ENCODE measurements at regions of chr2 and their contacts with region 1.

Region 1: GRCh38 chr2:170815746-170816503 is 762 bp upstream of the GAD1 start:
- DNase-seq: peak; percentile 65
- H3K4me3 Mint-ChIP-seq: peak overlapping the region; percentile 87
- H3K27ac Mint-ChIP-seq: peak overlapping the region; percentile 55
- H3K4me1 Mint-ChIP-seq: peaks cover 38% of the 10 kb centered on the region
- H3K27me3 Mint-ChIP-seq: peaks cover 50% of the 10 kb centered on the region

Region 2: GRCh38 chr2:170324640-170325046 is 491.3 kb before region 1 on chr2:
- intact Hi-C with region 1: loop called (anchors 1 kb)
- DNase-seq: peak; percentile 38
- H3K4me3 Mint-ChIP-seq: no peak overlapping the region
- H3K27ac Mint-ChIP-seq: no peak overlapping the region
- H3K4me1 Mint-ChIP-seq: peaks cover 3% of the 10 kb centered on the region
- H3K27me3 Mint-ChIP-seq: no peaks in the 10 kb centered on the region

Region 3: DNA sequence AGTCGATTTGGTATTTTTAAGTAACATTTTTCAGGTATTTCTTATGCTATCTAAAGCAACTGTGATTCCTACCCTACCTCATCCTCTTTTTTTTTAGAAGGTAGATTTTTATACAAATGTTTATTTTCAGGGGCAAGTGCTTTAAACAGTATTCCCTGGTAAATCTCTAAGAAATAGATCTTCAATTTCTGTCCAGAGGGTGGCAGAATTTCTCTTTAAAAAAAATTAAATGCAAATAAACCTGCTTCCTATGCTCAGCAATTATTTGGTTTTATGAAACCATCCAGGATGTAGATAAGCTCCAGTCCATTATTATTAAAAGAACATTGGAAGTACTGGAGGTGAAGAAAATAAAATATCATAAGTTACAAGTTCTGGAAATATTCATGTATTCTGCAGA is 446.0 kb before region 1 on chr2:
- intact Hi-C with region 1: loop called (anchors 2 kb)
- DNase-seq: no peak
- H3K4me3 Mint-ChIP-seq: peak overlapping the region; percentile 71
- H3K27ac Mint-ChIP-seq: peak overlapping the region; percentile 86
- H3K4me1 Mint-ChIP-seq: peaks cover 86% of the 10 kb centered on the region
- H3K27me3 Mint-ChIP-seq: no peaks in the 10 kb centered on the region

Region 4: DNA sequence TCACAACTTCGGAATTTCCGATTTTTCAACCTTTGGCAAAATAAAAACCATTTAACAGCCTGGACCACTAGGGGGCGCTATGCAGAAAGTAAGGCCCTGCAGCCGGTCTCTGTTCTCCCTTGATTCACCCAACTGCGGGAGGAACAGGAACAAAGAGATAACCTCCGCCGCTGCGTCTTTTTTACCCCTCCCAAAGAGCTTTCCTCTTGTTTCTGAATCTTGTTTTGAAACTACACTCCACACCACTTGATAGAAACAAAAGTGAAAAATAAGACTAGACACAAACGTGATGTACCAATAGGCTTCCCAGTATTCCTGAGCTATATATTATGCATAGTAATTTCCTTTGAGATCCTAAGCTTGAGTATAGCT is 406.8 kb before region 1 on chr2:
- intact Hi-C with region 1: loop called (anchors 2 kb)
- DNase-seq: peak; percentile 60
- H3K4me3 Mint-ChIP-seq: peak overlapping the region; percentile 35
- H3K27ac Mint-ChIP-seq: peak overlapping the region; percentile 55
- H3K4me1 Mint-ChIP-seq: peaks cover 17% of the 10 kb centered on the region
- H3K27me3 Mint-ChIP-seq: peaks cover 4% of the 10 kb centered on the region

Region 5: DNA sequence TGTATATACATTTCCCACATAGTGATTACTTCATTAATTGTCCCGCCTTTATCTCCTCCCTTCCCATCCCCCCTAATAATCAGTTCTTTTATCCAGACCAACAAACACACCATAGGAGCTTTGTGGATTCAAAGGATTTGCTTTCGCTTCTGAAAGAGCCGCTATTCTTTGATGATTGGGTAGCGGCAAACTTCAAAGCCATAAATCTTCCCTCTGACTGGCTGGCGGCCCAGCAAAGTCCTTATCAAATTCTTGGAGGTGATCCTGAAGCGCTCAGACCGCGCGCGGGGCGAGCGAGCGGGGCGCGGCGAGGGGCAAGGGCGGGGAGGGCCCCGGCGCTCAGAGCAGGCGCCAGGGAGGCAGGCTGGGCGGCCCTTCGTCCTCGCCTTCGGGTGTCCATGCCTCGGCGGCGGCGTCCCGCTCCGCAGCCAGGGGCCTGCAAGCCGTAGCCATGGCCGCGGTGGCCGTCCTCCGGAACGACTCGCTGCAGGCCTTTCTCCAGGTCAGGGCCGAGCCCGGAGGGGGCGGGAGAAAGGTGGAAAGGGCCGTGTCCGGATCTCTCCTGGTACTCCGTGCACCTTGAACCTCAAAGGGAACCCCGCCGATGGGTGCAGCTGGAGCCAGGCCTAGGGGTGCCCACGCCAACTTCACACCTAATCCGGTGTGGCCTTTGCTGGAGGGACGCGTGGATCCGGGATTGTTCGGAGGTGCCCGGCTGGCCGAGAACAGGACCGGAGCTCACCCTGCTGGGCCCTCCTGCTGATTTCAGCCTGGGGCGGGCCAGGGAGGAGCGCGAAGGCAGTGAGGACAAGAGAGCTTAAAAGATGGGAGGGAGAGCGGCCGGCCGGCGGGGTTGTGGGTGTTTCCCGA is 100.6 kb before region 1 on chr2 and contains the start of gene SP5:
- intact Hi-C with region 1: loop called (anchors 1 kb)
- DNase-seq: peak; percentile 40
- H3K4me3 Mint-ChIP-seq: peak within 1 kb of the TSS; percentile 76
- H3K27ac Mint-ChIP-seq: no peak within 1 kb of the TSS
- H3K4me1 Mint-ChIP-seq: peaks cover 26% of the 10 kb centered on the region
- H3K27me3 Mint-ChIP-seq: peaks cover 68% of the 10 kb centered on the region
- total RNA-seq, gene SP5: 0.30 and 0.32 TPM in 2 replicates

Region 6: DNA sequence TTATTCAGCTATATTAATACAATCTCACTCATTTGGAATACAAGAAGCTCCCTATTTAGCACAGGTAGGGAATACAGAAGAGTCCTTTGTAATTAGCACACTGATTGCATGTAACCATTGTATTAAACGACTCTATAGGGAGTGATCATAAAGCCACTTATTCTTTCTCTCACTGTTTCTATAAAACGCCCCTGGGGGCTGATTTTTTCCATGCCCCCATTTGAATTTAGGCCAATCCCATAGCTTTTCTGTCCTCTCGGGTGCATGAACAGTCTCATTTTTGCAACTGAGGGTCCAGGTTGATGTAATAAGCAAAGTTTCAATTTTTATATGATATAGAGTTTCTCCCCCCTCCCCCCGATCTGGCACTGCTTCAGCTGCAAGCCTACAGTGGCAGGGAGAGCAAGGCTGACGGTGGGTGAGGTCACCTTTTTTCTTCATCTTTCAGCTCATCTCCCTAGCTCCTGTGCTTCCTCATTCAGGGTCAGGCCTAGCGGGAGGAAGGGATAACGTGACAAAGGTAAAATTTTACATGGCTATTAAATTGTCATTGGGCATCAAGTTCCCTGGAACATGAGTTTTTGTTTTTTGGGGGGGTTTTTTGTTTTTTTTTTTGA is 46.5 kb after region 1 on chr2:
- intact Hi-C with region 1: no loop called
- DNase-seq: no peak
- H3K4me3 Mint-ChIP-seq: no peak overlapping the region
- H3K27ac Mint-ChIP-seq: no peak overlapping the region
- H3K4me1 Mint-ChIP-seq: no peaks in the 10 kb centered on the region
- H3K27me3 Mint-ChIP-seq: peaks cover 4% of the 10 kb centered on the region

Region 7: GRCh38 chr2:170873035-170873692 is 57.2 kb after region 1 on chr2:
- intact Hi-C with region 1: loop called (anchors 2 kb)
- DNase-seq: peak; percentile 70
- H3K4me3 Mint-ChIP-seq: peak overlapping the region; percentile 64
- H3K27ac Mint-ChIP-seq: peak overlapping the region; percentile 82
- H3K4me1 Mint-ChIP-seq: peaks cover 13% of the 10 kb centered on the region
- H3K27me3 Mint-ChIP-seq: peaks cover 3% of the 10 kb centered on the region

Measured in activated T-helper 2 cell treated with anti-CD3 and anti-CD28 coated beads, Interferon-gamma antibody, Interleukin-2, Interleukin-4, amounts not matched to agents 10 μg/mL and 5 μg/mL and 100 μg/mL, durations not matched to agents 14 hours and 24 hours and 36 hours (primary cell).